ENCODE measurements at regions of chr3 and their contacts with region 1.

Region 1: GRCh38 chr3:133475245-133476010 is 75.6 kb downstream of the BFSP2 start:
- DNase-seq: peak; percentile 89
- ATAC-seq: peak; percentile 88
- H3K4me3 ChIP-seq: peak overlapping the region; percentile 40; the same call in 1 of the 2 replicates
- H3K27ac ChIP-seq: peak overlapping the region; percentile 97
- H3K4me1 ChIP-seq: peaks cover 69% of the 10 kb centered on the region
- H3K27me3 ChIP-seq: no peaks in the 10 kb centered on the region
- CTCF ChIP-seq: peak in 1 of 3 experiments; percentile 10; a peak in 1 of 6 replicates
- EP300 ChIP-seq: peak; percentile 80 to 94
- POLR2A ChIP-seq: no peak
- RAD21 ChIP-seq: peak; percentile 12; the same call in 1 of the 2 replicates

Region 2: DNA sequence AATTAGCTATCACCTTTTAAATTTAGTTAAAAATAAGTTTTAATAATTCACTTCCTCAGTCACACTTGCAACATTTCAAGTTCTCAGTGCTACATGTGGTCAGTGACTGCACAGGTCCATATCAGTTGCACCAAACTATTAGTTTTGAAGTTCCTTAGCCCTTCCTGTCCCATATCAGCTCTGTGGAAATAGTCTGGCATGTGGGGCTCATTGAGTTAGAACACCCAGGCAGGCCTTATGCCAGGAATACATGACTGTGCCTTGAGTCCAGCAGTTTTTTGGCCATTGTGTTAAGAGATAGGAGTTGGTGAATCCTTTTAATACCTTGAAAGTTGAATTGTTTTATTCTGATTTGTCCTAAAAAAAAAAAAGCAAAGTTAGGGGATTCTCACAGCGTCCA is 229.3 kb before region 1 on chr3:
- CTCF ChIA-PET with region 1: no interaction called
- POLR2A ChIA-PET with region 1: no interaction called
- RAD21 ChIA-PET with region 1: no interaction called
- SMC1A ChIA-PET with region 1: no interaction called
- in situ Hi-C with region 1: no loop called
- intact Hi-C with region 1: no loop called
- DNase-seq: no peak
- ATAC-seq: no peak
- H3K4me3 ChIP-seq: no peak overlapping the region
- H3K27ac ChIP-seq: no peak overlapping the region
- H3K4me1 ChIP-seq: no peaks in the 10 kb centered on the region
- H3K27me3 ChIP-seq: no peaks in the 10 kb centered on the region
- CTCF ChIP-seq: no peak
- EP300 ChIP-seq: no peak
- POLR2A ChIP-seq: no peak
- RAD21 ChIP-seq: no peak

Region 3: GRCh38 chr3:133426721-133427120 is 48.7 kb before region 1 on chr3:
- CTCF ChIA-PET with region 1: interaction called, 11 read pairs
- POLR2A ChIA-PET with region 1: no interaction called
- RAD21 ChIA-PET with region 1: interaction called, 3 read pairs
- SMC1A ChIA-PET with region 1: interaction called, 3 read pairs
- in situ Hi-C with region 1: no loop called
- intact Hi-C with region 1: no loop called
- DNase-seq: no peak
- ATAC-seq: no peak
- H3K4me3 ChIP-seq: no peak overlapping the region
- H3K27ac ChIP-seq: no peak overlapping the region
- H3K4me1 ChIP-seq: peaks cover 5% of the 10 kb centered on the region; the same call in 1 of the 2 replicates
- H3K27me3 ChIP-seq: peaks cover 0 to 4% of the 10 kb centered on the region in 2 experiments; a peak in 1 of 4 replicates
- CTCF ChIP-seq: no peak
- EP300 ChIP-seq: no peak
- POLR2A ChIP-seq: no peak
- RAD21 ChIP-seq: no peak

Region 4: GRCh38 chr3:133464573-133464972 is 10.9 kb before region 1 on chr3:
- CTCF ChIA-PET with region 1: interaction called, 18 read pairs
- POLR2A ChIA-PET with region 1: interaction called, 17 read pairs
- RAD21 ChIA-PET with region 1: interaction called, 8 read pairs
- SMC1A ChIA-PET with region 1: interaction called, 380 read pairs
- in situ Hi-C with region 1: no loop called
- intact Hi-C with region 1: no loop called
- DNase-seq: no peak
- ATAC-seq: peak; percentile 65
- H3K4me3 ChIP-seq: no peak overlapping the region
- H3K27ac ChIP-seq: peak overlapping the region; percentile 4; the same call in 1 of the 2 replicates
- H3K4me1 ChIP-seq: peaks cover 58% of the 10 kb centered on the region
- H3K27me3 ChIP-seq: no peaks in the 10 kb centered on the region
- CTCF ChIP-seq: peak; percentile 22 to 32 (median 23); a peak in 3 of 6 replicates
- EP300 ChIP-seq: no peak
- POLR2A ChIP-seq: no peak
- RAD21 ChIP-seq: peak; percentile 58

Region 5: DNA sequence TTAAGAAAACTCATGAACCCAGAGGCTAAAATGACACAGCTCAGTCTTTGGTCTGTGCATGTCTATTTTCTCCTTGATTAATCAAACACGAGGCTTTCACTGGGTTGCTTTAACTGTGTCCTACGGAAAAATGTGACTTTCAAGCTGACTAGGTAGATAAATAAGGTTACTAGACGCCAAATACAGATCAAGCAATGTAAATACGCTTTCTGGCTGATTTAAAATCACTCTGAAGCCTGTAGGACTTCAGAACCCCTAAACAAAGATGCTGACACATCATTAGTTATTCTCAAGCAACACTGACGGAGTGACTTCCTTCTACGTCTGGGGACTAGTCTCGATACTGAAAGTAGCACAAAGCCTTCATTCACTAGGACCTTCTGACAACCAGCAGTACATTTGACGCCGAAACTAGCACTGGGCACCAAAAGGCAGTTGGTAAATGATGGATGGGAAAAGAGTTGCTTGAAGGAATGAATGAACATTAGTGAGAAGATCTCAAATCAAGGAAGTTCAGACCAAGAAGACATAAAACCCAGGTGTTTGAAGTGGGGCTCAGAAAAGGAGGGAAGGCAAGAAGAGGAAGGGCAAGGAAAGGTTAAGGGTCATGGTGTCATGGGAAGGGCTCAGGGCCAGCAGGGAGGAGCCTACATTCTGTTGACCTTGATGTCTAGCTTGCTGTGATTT is 30.9 kb after region 1 on chr3:
- CTCF ChIA-PET with region 1: interaction called, 6 read pairs
- POLR2A ChIA-PET with region 1: interaction called, 7 read pairs
- RAD21 ChIA-PET with region 1: interaction called, 12 read pairs
- SMC1A ChIA-PET with region 1: interaction called, 10 read pairs
- in situ Hi-C with region 1: no loop called
- intact Hi-C with region 1: no loop called
- DNase-seq: peak; percentile 93
- ATAC-seq: peak; percentile 98
- H3K4me3 ChIP-seq: peak overlapping the region; percentile 43; the same call in 1 of the 2 replicates
- H3K27ac ChIP-seq: peak overlapping the region; percentile 97
- H3K4me1 ChIP-seq: peaks cover 18% of the 10 kb centered on the region
- H3K27me3 ChIP-seq: no peaks in the 10 kb centered on the region
- CTCF ChIP-seq: no peak
- EP300 ChIP-seq: peak in 1 of 2 experiments; percentile 61; a peak in 3 of 4 replicates
- POLR2A ChIP-seq: peak; percentile 49; the same call in 1 of the 2 replicates
- RAD21 ChIP-seq: 0 out of 2 replicates have a peak, but pooled peaks have one; percentile 17

Region 6: GRCh38 chr3:133578548-133579191 is 103.2 kb after region 1 on chr3:
- CTCF ChIA-PET with region 1: interaction called, 17 read pairs
- POLR2A ChIA-PET with region 1: interaction called, 38 read pairs
- RAD21 ChIA-PET with region 1: interaction called, 137 read pairs
- SMC1A ChIA-PET with region 1: interaction called, 25 read pairs
- in situ Hi-C with region 1: no loop called
- intact Hi-C with region 1: loop called (anchors 2 kb)
- DNase-seq: no peak
- ATAC-seq: peak; percentile 6
- H3K4me3 ChIP-seq: peak overlapping the region; percentile 91
- H3K27ac ChIP-seq: no peak overlapping the region
- H3K4me1 ChIP-seq: peaks cover 12% of the 10 kb centered on the region
- H3K27me3 ChIP-seq: no peaks in the 10 kb centered on the region
- CTCF ChIP-seq: peak; percentile 27 to 51 (median 48); a peak in 5 of 6 replicates
- EP300 ChIP-seq: no peak
- POLR2A ChIP-seq: no peak
- RAD21 ChIP-seq: peak; percentile 47

Measured in GM12878 (cell line).